K562 (cell line): ENCODE measurements at regions of chr16 and their contacts with region 1.

Region 1: DNA sequence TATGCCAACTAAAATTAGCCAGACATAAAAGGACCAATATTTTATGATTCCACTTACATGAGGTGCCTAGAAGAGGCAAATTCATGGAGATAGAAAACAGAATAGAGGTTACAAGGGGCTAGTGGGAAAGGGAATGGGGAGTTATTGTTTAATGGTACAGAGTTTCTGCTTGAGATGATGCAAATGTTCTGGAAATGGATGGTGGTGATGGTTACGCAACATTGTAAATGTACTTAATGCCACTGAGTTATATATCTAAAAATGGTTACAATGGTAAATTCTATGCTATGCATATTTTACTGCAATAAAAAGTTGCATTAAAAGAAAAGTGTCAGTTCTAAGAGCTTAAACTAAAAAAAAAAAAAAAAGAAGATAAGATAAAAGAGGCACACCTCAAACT is 17.9 kb downstream of the MT1X start:
- DNase-seq: no peak
- ATAC-seq: no peak
- H3K4me3 ChIP-seq: no peak overlapping the region
- H3K27ac ChIP-seq: no peak overlapping the region
- H3K4me1 ChIP-seq: no peaks in the 10 kb centered on the region
- H3K27me3 ChIP-seq: peaks cover 0 to 25% of the 10 kb centered on the region in 2 experiments; a peak in 2 of 5 replicates
- CTCF ChIP-seq: no peak
- EP300 ChIP-seq: no peak
- POLR2A ChIP-seq: no peak
- RAD21 ChIP-seq: no peak

Region 2: GRCh38 chr16:56576585-56577293 is 123.5 kb before region 1 on chr16:
- CTCF ChIA-PET with region 1: interaction called, 26 read pairs
- POLR2A ChIA-PET with region 1: no interaction called
- in situ Hi-C with region 1: loop called (anchors 5 kb)
- intact Hi-C with region 1: loop called (anchors 1 kb)
- DNase-seq: peak; percentile 77 to 86 (median 84)
- ATAC-seq: peak; percentile 100
- H3K4me3 ChIP-seq: no peak overlapping the region
- H3K27ac ChIP-seq: no peak overlapping the region
- H3K4me1 ChIP-seq: no peaks in the 10 kb centered on the region
- H3K27me3 ChIP-seq: peaks cover 2 to 10% of the 10 kb centered on the region in 2 experiments; a peak in 4 of 5 replicates
- CTCF ChIP-seq: peak; percentile 93 to 96 (median 95)
- EP300 ChIP-seq: no peak
- POLR2A ChIP-seq: no peak
- RAD21 ChIP-seq: peak; percentile 88 to 96

Region 3: DNA sequence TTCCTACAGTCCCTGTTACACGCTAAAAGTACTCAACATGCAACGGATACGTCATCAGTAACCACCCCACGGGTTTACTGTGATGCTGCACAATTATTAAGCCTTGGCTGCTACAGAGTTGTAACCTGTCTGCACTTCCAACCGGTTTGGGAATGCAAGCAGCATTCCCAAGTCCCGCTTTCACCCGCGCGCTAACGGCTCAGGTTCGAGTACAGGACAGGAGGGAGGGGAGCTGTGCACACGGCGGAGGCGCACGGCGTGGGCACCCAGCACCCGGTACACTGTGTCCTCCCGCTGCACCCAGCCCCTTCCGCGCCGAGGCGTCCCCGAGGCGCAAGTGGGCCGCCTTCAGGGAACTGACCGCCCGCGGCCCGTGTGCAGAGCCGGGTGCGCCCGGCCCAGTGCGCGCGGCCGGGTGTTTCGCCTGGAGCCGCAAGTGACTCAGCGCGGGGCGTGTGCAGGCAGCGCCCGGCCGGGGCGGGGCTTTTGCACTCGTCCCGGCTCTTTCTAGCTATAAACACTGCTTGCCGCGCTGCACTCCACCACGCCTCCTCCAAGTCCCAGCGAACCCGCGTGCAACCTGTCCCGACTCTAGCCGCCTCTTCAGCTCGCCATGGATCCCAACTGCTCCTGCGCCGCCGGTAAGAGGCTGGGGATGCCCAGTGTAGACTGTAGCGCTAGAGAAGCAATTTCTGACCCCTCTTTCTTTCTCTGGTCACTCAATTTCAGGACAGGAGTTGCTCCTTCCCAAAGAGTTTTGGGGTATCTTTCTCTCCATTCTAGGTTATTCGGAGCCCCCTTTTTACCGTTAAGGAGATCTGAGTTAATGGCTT is 91.9 kb before region 1 on chr16 and contains the start of gene MT2A:
- CTCF ChIA-PET with region 1: interaction called, 13 read pairs
- POLR2A ChIA-PET with region 1: no interaction called
- in situ Hi-C with region 1: no loop called
- intact Hi-C with region 1: loop called (anchors 1 kb)
- DNase-seq: peak; percentile 94 to 96 (median 95)
- ATAC-seq: peak; percentile 98
- H3K4me3 ChIP-seq: peak within 1 kb of the TSS; percentile 47
- H3K27ac ChIP-seq: peak within 1 kb of the TSS; percentile 86
- H3K4me1 ChIP-seq: peaks cover 27 to 29% of the 10 kb centered on the region in 2 experiments
- H3K27me3 ChIP-seq: no peaks in the 10 kb centered on the region
- CTCF ChIP-seq: no peak
- EP300 ChIP-seq: 0 out of 2 replicates have a peak, but pooled peaks have one; percentile 24
- POLR2A ChIP-seq: peak; percentile 82
- RAD21 ChIP-seq: no peak
- polyA plus RNA-seq, gene MT2A: 13.3 to 16.9 TPM

Region 4: DNA sequence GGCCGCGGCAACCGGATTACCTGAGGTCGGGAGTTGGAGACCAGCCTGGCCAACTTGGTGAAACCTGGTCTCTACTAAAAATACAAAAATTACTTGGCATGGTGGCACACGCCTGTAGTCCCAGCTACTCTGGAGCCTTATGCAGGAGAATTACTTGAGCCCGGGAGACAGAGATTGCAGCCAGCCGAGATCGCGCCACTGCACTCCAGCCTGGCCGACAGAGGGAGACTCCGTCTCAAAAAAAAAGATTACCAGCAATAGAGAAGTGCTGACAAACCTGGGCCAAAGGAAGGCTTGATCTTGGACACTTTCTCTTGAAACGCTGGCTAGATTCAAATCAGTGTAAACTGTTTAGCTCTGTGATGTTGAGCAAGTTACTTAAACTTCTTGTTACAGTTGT is 26.3 kb before region 1 on chr16:
- CTCF ChIA-PET with region 1: interaction called, 17 read pairs
- POLR2A ChIA-PET with region 1: interaction called, 3 read pairs
- in situ Hi-C with region 1: no loop called
- intact Hi-C with region 1: loop called (anchors 1 kb)
- DNase-seq: peak in 1 of 4 experiments; percentile 51
- ATAC-seq: peak; percentile 87
- H3K4me3 ChIP-seq: no peak overlapping the region
- H3K27ac ChIP-seq: no peak overlapping the region
- H3K4me1 ChIP-seq: peaks cover 0 to 11% of the 10 kb centered on the region in 2 experiments; a peak in 1 of 5 replicates
- H3K27me3 ChIP-seq: peaks cover 33 to 54% of the 10 kb centered on the region in 2 experiments
- CTCF ChIP-seq: peak; percentile 70 to 73 (median 73)
- EP300 ChIP-seq: no peak
- POLR2A ChIP-seq: no peak
- RAD21 ChIP-seq: peak; percentile 60 to 76

Region 5: DNA sequence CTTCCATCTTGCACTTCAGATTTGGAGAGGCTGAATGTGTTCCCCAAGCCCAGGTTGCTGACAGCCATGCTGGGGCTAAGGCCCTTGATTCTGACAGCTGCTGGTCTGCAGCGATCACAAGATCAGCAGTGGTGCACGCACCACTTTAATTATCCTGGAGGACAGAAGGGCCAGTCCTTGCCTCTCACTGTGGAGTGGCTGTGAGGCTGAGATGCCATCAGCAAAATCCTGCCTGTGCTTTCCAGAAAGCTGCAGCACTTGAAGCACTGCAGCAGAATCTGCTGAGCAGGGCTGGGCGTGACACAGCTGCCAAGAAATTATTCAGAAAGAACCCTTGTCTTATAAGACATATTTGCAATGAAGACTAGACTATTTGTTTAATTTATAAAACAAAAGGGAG is 66.8 kb after region 1 on chr16:
- CTCF ChIA-PET with region 1: no interaction called
- POLR2A ChIA-PET with region 1: no interaction called
- in situ Hi-C with region 1: no loop called
- intact Hi-C with region 1: no loop called
- DNase-seq: no peak
- ATAC-seq: no peak
- H3K4me3 ChIP-seq: no peak overlapping the region
- H3K27ac ChIP-seq: no peak overlapping the region
- H3K4me1 ChIP-seq: peaks cover 0 to 20% of the 10 kb centered on the region in 2 experiments; a peak in 2 of 5 replicates
- H3K27me3 ChIP-seq: no peaks in the 10 kb centered on the region
- CTCF ChIP-seq: no peak
- EP300 ChIP-seq: no peak
- POLR2A ChIP-seq: no peak
- RAD21 ChIP-seq: no peak

Region 6: GRCh38 chr16:56807011-56807675 is 106.9 kb after region 1 on chr16:
- CTCF ChIA-PET with region 1: no interaction called
- POLR2A ChIA-PET with region 1: no interaction called
- in situ Hi-C with region 1: no loop called
- intact Hi-C with region 1: no loop called
- DNase-seq: no peak
- ATAC-seq: no peak
- H3K4me3 ChIP-seq: no peak overlapping the region
- H3K27ac ChIP-seq: no peak overlapping the region
- H3K4me1 ChIP-seq: no peaks in the 10 kb centered on the region
- H3K27me3 ChIP-seq: no peaks in the 10 kb centered on the region
- CTCF ChIP-seq: no peak
- EP300 ChIP-seq: no peak
- POLR2A ChIP-seq: no peak
- RAD21 ChIP-seq: no peak